Activated T-helper 1 cell treated with anti-CD3 and anti-CD28 coated beads, Interleukin-12 subunit alpha, Interleukin-12 subunit beta, Interleukin-2, Interleukin-4 antibody, amounts not matched to agents 30 ng/mL and 10 ng/mL and 1 ng/mL, durations not matched to agents 14 hours and 24 hours and 36 hours (primary cell): ENCODE measurements at regions of chrX and their contacts with region 1.

Region 1: GRCh38 chrX:20442597-20442996 is 175.9 kb upstream of the RPS6KA3 start:
- DNase-seq: peak; percentile 65
- H3K4me3 Mint-ChIP-seq: no peak overlapping the region
- H3K27ac Mint-ChIP-seq: no peak overlapping the region
- H3K4me1 Mint-ChIP-seq: peaks cover 54% of the 10 kb centered on the region
- H3K27me3 Mint-ChIP-seq: peaks cover 2% of the 10 kb centered on the region

Region 2: DNA sequence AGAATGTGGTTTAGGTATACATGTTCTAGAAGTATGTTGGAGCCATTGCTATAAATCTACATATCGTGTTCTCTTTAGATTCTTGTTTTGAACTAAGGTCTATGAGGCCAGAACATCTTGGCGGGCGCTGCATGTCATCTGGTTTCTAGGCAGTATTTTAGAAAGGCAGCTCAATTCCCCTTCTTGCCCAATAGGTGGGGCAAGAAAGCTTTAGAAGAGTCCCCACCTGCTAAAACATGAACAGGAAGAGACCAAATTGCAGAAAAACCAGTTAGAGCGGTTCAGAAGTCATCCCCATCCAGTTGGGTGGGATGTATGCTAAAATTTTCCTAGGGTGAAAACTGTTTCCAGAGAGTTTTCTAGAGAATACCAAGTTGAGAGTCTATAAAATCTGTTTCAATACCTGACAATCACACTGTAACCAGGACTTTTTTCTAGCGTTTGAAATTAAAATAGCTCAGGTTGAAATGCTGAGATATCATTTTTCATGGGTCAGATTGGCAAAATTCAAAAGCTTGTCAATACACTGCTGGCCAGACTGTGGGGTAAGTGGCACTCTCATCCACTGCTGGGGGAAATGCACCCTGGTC is 537.7 kb before region 1 on chrX:
- intact Hi-C with region 1: loop called (anchors 5 kb)
- DNase-seq: no peak
- H3K4me3 Mint-ChIP-seq: no peak overlapping the region
- H3K27ac Mint-ChIP-seq: no peak overlapping the region
- H3K4me1 Mint-ChIP-seq: peaks cover 19% of the 10 kb centered on the region
- H3K27me3 Mint-ChIP-seq: no peaks in the 10 kb centered on the region

Region 3: GRCh38 chrX:20252381-20253231 is 190.0 kb before region 1 on chrX:
- intact Hi-C with region 1: loop called (anchors 1 kb)
- DNase-seq: peak; percentile 49
- H3K4me3 Mint-ChIP-seq: no peak overlapping the region
- H3K27ac Mint-ChIP-seq: peak overlapping the region; percentile 65
- H3K4me1 Mint-ChIP-seq: peaks cover 46% of the 10 kb centered on the region
- H3K27me3 Mint-ChIP-seq: no peaks in the 10 kb centered on the region

Region 4: DNA sequence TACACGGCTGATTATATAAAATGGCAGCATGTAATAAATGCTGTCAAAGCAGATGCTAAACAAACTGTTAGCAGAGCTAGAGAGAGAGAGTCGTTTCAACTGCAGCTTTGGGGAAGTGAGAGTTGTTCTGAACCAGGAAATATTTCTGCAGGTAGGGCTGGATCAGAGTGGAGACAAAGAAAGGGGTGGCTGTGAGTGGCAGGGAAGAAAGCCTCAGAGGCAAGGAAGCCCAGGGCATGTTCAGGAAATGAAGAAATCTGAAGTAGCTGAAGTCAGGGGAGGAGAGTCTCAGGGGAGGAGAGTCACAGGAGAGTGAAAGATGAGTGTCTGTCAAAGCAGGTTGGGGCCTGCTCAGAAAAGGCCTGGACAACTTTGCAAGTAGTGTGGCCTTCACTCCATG is 127.5 kb before region 1 on chrX:
- intact Hi-C with region 1: no loop called
- DNase-seq: no peak
- H3K4me3 Mint-ChIP-seq: no peak overlapping the region
- H3K27ac Mint-ChIP-seq: no peak overlapping the region
- H3K4me1 Mint-ChIP-seq: no peaks in the 10 kb centered on the region
- H3K27me3 Mint-ChIP-seq: no peaks in the 10 kb centered on the region

Region 5: DNA sequence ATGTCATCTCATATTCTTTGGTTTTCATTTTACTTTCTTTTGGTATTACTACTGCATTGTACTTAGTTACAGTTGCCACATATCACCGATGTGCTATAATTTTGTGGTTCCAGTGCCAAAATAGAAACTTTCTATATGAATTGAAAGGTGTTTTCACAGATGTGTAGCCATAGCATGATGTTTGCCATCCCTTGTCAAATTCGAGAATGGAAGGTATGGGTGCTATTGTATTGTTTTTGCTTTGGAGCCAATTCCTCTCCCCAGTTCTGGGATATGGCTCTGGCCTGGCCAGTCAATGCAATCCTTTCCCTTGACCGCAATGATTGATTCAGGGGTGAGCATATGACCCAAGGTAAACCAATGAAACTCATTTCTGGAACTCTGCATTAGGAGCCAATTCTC is 89.7 kb before region 1 on chrX:
- intact Hi-C with region 1: loop called (anchors 2 kb)
- DNase-seq: no peak
- H3K4me3 Mint-ChIP-seq: no peak overlapping the region
- H3K27ac Mint-ChIP-seq: no peak overlapping the region
- H3K4me1 Mint-ChIP-seq: peaks cover 5% of the 10 kb centered on the region
- H3K27me3 Mint-ChIP-seq: peaks cover 3% of the 10 kb centered on the region

Region 6: DNA sequence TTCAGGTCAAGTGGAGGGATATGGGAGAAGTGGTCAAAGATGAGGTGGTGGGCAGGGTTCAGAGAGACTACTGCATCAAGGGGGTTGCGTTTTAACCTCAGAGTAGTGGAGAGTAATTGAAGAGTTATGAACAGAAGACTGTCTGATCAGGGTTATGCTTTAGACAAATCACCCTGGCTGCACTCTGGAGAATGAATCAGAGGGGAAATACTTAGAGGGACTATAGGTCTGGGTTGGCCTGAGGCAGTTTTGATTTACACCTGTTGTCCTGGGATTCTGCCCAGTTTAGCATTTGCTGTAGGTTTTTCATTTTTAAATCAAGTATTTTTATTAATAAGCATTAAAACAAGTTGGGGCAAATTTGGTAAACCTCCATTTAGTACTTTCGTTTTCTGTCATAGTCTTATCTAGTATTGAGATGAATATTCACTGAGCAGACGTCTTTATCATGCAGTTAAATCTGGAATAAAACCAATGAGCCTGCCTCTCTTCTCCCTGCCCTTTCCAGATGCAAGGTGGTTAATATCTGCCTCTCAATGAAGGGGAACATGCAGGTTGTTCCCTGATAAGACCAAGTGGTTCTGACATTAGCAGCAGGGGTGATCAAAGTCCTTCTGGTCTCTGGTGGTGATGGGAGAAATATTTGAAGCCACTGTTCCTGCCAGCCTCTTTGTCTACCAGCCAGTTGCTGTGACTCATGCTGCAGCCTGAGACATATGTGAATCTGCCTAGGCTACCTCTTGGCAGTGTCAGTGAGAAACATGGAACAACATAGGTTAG is 59.9 kb before region 1 on chrX:
- intact Hi-C with region 1: loop called (anchors 5 kb)
- DNase-seq: no peak
- H3K4me3 Mint-ChIP-seq: no peak overlapping the region
- H3K27ac Mint-ChIP-seq: no peak overlapping the region
- H3K4me1 Mint-ChIP-seq: peaks cover 26% of the 10 kb centered on the region
- H3K27me3 Mint-ChIP-seq: no peaks in the 10 kb centered on the region